T-cell (primary cell): ENCODE measurements at regions of chr2 and their contacts with region 1.

Region 1: GRCh38 chr2:102487761-102488466 is 14.9 kb downstream of the SLC9A4 start:
- DNase-seq: no peak
- ATAC-seq: no peak
- H3K4me3 ChIP-seq: no peak overlapping the region
- H3K4me3 Mint-ChIP-seq: no peak overlapping the region
- H3K27ac ChIP-seq: no peak overlapping the region
- H3K27ac Mint-ChIP-seq: no peak overlapping the region
- H3K4me1 ChIP-seq: no peaks in the 10 kb centered on the region
- H3K4me1 Mint-ChIP-seq: peaks cover 0 to 12% (median 10%) of the 10 kb centered on the region in 3 donors
- H3K27me3 ChIP-seq: peaks cover 0 to 21% of the 10 kb centered on the region in 2 experiments
- H3K27me3 Mint-ChIP-seq: peaks cover 26 to 28% of the 10 kb centered on the region in 2 donors

Region 2: GRCh38 chr2:102142829-102143449 is 345.0 kb before region 1 on chr2:
- CTCF ChIA-PET with region 1: no interaction called
- POLR2A ChIA-PET with region 1: no interaction called
- DNase-seq: no peak
- ATAC-seq: no peak
- H3K4me3 ChIP-seq: peak overlapping the region in 1 of 2 donors; percentile 32
- H3K4me3 Mint-ChIP-seq: peak overlapping the region; percentile 47 to 72 (median 66)
- H3K27ac ChIP-seq: no peak overlapping the region
- H3K27ac Mint-ChIP-seq: peak overlapping the region in 1 of 2 donors; percentile 75
- H3K4me1 ChIP-seq: peaks cover 0 to 13% of the 10 kb centered on the region in 2 experiments
- H3K4me1 Mint-ChIP-seq: peaks cover 8 to 27% (median 19%) of the 10 kb centered on the region in 3 donors
- H3K27me3 ChIP-seq: peaks cover 0 to 46% of the 10 kb centered on the region in 2 experiments
- H3K27me3 Mint-ChIP-seq: peaks cover 22 to 37% of the 10 kb centered on the region in 2 donors

Region 3: DNA sequence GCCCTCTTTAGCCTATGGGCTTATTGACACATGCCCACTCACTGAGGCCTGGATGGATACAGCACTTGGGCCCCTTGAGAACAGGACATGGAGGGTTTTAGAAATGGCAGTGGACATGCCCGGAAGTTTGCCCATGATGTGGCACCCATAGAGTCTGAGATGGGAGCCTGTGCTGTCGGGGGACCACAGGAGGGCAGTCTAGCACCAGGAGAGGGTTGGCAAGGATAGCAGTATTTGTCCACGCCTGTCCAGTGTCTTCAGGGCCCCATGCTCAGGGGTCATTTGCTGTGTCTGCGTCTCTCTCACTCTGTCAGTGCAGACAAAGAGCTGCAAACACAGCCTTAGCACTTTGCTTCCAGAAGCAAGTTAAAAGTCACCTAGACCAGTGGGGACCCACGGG is 252.4 kb before region 1 on chr2:
- CTCF ChIA-PET with region 1: no interaction called
- POLR2A ChIA-PET with region 1: no interaction called
- DNase-seq: peak in 3 of 35 experiments; percentile 14 to 31 (median 20)
- ATAC-seq: no peak
- H3K4me3 ChIP-seq: no peak overlapping the region
- H3K4me3 Mint-ChIP-seq: no peak overlapping the region
- H3K27ac ChIP-seq: no peak overlapping the region
- H3K27ac Mint-ChIP-seq: no peak overlapping the region
- H3K4me1 ChIP-seq: peaks cover 0 to 2% of the 10 kb centered on the region in 2 experiments
- H3K4me1 Mint-ChIP-seq: peaks cover 1 to 39% (median 28%) of the 10 kb centered on the region in 3 donors
- H3K27me3 ChIP-seq: peaks cover 0 to 4% of the 10 kb centered on the region in 2 experiments
- H3K27me3 Mint-ChIP-seq: no peaks in the 10 kb centered on the region

Region 4: GRCh38 chr2:102434655-102435381 is 53.1 kb before region 1 on chr2:
- CTCF ChIA-PET with region 1: interaction called in 1 of 2 experiments, 14 read pairs
- POLR2A ChIA-PET with region 1: no interaction called
- DNase-seq: no peak
- ATAC-seq: no peak
- H3K4me3 ChIP-seq: no peak overlapping the region
- H3K4me3 Mint-ChIP-seq: no peak overlapping the region
- H3K27ac ChIP-seq: no peak overlapping the region
- H3K27ac Mint-ChIP-seq: peak overlapping the region in 1 of 2 donors; percentile 13
- H3K4me1 ChIP-seq: peaks cover 5% of the 10 kb centered on the region in 2 experiments
- H3K4me1 Mint-ChIP-seq: peaks cover 12 to 45% (median 31%) of the 10 kb centered on the region in 3 donors
- H3K27me3 ChIP-seq: no peaks in the 10 kb centered on the region
- H3K27me3 Mint-ChIP-seq: no peaks in the 10 kb centered on the region

Region 5: GRCh38 chr2:102619414-102620319 is 131.8 kb after region 1 on chr2 and contains the start of gene SLC9A2:
- CTCF ChIA-PET with region 1: no interaction called
- POLR2A ChIA-PET with region 1: no interaction called
- DNase-seq: peak in 2 of 35 experiments; percentile 1
- ATAC-seq: peak in 1 of 4 experiments; percentile 56
- H3K4me3 ChIP-seq: peak within 1 kb of the TSS in 1 of 2 donors; percentile 79
- H3K4me3 Mint-ChIP-seq: peak within 1 kb of the TSS; percentile 39 to 80 (median 65)
- H3K27ac ChIP-seq: no peak within 1 kb of the TSS
- H3K27ac Mint-ChIP-seq: no peak within 1 kb of the TSS
- H3K4me1 ChIP-seq: peaks cover 2 to 13% of the 10 kb centered on the region in 2 experiments
- H3K4me1 Mint-ChIP-seq: peaks cover 10 to 15% (median 14%) of the 10 kb centered on the region in 3 donors
- H3K27me3 ChIP-seq: peaks cover 13 to 27% of the 10 kb centered on the region in 2 experiments
- H3K27me3 Mint-ChIP-seq: peaks cover 54 to 60% of the 10 kb centered on the region in 2 donors
- total RNA-seq, gene SLC9A2: not detected